Activated naive CD8-positive, alpha-beta T cell treated with anti-CD3 and anti-CD28 coated beads, Interleukin-2, amount 10 ng/mL, durations not matched to agents 7 days and 5 days (primary cell): ENCODE measurements at regions of chr1 and their contacts with region 1.

Region 1: DNA sequence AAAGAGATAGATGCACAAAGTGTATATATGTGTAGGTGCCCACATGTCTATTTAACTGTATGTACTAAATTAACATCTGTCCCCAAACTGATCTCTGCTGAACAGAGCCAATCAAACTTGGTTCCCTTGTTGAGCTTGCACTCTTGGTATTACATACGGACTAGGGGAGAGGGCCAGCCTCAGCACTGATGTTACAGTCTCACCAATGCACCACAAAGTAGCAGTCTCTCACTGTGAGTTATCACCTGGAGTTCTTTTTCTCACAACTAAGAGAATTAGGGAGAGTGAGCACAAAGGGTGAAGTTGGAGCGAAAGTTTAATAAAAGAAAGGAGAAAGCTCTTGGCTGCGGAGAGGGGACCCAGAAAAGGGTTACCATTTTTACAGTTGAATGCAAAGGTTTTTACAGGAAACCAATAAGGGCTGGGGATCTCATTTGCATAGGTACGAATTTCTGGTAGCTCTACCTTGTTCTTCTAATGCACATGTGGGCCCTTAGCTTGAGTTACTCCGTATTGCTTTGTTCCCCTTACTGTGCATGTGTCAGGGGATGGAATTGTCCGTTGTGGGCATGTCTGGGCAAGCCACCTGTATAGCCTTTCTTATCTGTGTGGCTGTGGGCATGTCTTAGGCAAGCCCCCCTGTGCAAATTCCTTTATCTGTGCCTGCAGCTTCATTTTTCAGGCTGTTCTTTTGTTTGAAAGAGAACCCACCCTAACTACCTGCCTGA is 13.3 kb upstream of the CHI3L2 start:
- DNase-seq: peak; percentile 43
- ATAC-seq: peak; percentile 3
- H3K4me3 Mint-ChIP-seq: peak overlapping the region; percentile 84
- H3K27ac Mint-ChIP-seq: peak overlapping the region; percentile 89
- H3K4me1 Mint-ChIP-seq: peaks cover 70% of the 10 kb centered on the region
- H3K27me3 Mint-ChIP-seq: no peaks in the 10 kb centered on the region

Region 2: DNA sequence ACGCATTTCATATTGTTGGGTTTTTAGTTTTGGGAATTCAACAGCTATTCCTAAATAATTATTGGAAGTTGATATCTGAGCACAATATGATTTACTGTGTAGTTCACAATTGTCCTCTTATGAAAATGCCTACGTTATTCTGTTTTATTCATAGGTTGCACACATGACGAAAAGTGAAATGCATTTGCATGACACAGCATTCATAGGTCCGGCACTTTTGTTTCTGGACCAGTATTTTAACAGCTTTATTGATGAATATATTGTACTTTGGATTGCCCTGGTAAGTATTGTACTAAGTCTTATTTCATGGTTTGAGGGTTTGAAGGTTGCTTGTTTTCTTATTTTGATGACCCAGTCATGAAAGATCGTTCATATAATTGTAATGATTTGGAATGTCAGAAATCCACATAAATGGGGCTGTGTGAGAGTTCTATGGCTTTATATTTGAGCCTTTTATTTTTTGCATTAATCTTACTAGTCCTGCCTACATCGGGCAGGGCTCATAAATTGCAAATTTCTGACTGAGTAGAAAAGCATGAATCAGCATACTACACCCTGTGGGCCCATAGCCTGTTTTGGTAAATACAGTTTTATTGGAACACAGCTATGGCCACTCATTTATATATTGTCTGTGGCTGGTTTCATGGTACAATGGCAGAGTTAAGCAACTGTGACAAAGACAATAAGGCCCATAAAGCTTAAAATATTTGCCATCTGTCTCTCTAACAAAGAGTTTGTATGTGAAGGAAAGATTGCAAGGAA is 30.7 kb before region 1 on chr1:
- POLR2A ChIA-PET with region 1: interaction called, 15 read pairs
- DNase-seq: no peak
- ATAC-seq: no peak
- H3K4me3 Mint-ChIP-seq: no peak overlapping the region
- H3K27ac Mint-ChIP-seq: no peak overlapping the region
- H3K4me1 Mint-ChIP-seq: peaks cover 28% of the 10 kb centered on the region
- H3K27me3 Mint-ChIP-seq: no peaks in the 10 kb centered on the region

Region 3: DNA sequence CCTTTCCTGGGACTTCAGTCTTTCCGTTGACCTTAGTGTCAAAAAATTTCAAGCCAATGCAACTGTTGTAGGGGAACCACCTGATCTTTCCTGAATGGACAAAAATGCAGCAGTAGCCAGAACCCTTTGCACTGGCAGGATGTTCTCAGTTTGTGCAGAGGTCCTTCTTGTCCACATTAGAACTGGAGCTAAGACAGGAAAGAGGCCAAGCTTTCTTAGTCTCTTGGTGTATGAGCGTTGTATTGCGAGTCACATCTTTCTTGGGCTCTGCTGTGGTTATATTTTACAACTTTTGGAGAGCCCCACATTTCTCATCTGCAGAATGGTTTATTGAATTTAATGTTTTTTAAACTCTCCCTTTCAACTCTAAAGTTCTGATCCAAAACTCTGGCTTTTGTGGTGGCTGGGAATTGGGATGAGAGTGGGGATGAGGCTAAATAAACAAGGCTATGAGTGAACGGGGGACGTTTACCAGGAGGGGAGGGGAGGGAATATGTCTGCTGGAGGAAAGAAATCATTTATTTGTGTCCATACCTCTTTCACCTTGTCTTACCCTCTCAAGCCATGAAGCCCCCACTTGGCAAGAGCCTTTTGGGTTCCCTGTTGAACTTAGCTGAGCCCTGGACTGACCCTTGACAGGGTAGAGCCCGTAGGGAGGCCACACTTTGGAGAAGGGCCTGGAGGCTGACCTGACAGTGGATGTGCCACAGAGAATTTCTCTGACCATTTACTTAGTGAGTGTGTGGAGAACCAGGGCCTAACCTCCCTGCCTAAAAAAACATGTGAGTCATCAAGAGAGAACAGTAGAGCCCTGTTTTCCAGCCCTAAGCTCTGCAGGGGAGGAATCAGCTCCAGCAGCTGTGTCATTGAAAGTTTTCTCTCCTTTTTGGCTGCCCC is 13.9 kb after region 1 on chr1:
- POLR2A ChIA-PET with region 1: interaction called, 66 read pairs
- DNase-seq: no peak
- ATAC-seq: peak; percentile 24
- H3K4me3 Mint-ChIP-seq: peak overlapping the region; percentile 37
- H3K27ac Mint-ChIP-seq: peak overlapping the region; percentile 69
- H3K4me1 Mint-ChIP-seq: peaks cover 62% of the 10 kb centered on the region
- H3K27me3 Mint-ChIP-seq: no peaks in the 10 kb centered on the region